ENCODE measurements at regions of chr10 and their contacts with region 1.

Region 1: GRCh38 chr10:47438857-47439474 is 44.9 kb downstream of the ANXA8 start:
- DNase-seq: peak in 1 of 5 donors; percentile 3
- H3K4me3 ChIP-seq: no peak overlapping the region
- H3K27ac ChIP-seq: no peak overlapping the region
- H3K4me1 ChIP-seq: no peaks in the 10 kb centered on the region
- H3K27me3 ChIP-seq: no peaks in the 10 kb centered on the region
- CTCF ChIP-seq: no peak
- EP300 ChIP-seq: no peak
- POLR2A ChIP-seq: no peak

Region 2: DNA sequence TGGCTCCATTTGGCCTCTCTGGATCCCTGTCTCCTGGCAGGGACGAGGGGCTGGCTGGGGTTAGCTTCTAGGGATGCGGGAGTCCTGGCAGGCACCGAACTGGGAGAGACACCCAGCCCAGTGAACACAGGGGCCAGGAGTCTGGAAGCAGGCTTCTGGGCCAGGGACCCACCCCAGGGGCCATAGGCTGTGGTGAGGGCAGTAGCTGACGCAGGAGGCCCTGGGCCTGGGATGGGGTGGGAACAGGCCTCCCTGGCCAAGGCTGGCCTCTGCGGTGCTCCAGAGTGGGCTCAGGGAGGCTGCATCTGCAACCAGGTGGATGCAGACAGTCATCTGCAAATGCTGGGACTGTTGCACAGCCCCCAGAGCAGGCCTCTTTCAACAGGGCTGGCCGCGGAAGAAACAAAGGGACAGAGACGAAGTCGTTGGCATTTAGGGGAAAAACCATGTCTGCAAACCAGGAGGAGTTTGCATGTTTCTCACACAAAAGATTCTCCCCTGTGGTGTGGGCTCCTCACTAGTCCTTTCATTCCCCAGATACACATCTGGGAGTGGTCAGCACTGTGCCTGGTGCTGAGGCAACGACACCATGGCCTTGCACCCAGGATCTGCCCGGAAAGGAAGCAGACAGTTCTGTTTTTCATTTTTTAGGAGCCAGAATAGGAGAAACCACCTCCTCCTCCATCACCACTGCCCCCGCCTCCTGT is 18.5 kb before region 1 on chr10:
- intact Hi-C with region 1: loop called in 1 of 4 experiments (anchors 1 kb)
- DNase-seq: no peak
- H3K4me3 ChIP-seq: no peak overlapping the region
- H3K27ac ChIP-seq: no peak overlapping the region
- H3K4me1 ChIP-seq: no peaks in the 10 kb centered on the region
- H3K27me3 ChIP-seq: no peaks in the 10 kb centered on the region
- CTCF ChIP-seq: no peak
- EP300 ChIP-seq: no peak
- POLR2A ChIP-seq: no peak

Region 3: GRCh38 chr10:47449102-47449979 is 10.4 kb after region 1 on chr10:
- intact Hi-C with region 1: no loop called
- DNase-seq: peak in 1 of 5 donors; percentile 13
- H3K4me3 ChIP-seq: no peak overlapping the region
- H3K27ac ChIP-seq: no peak overlapping the region
- H3K4me1 ChIP-seq: no peaks in the 10 kb centered on the region
- H3K27me3 ChIP-seq: no peaks in the 10 kb centered on the region
- CTCF ChIP-seq: no peak
- EP300 ChIP-seq: no peak
- POLR2A ChIP-seq: no peak